ENCODE measurements at regions of chr2 and their contacts with region 1.

Region 1: GRCh38 chr2:29063646-29064343 is 10.5 kb downstream of the PCARE start:
- DNase-seq: peak; percentile 28
- H3K4me3 ChIP-seq: no peak overlapping the region
- H3K27ac ChIP-seq: peak overlapping the region; percentile 28 to 71
- H3K4me1 ChIP-seq: peaks cover 3% of the 10 kb centered on the region
- H3K27me3 ChIP-seq: no peaks in the 10 kb centered on the region
- CTCF ChIP-seq: no peak
- POLR2A ChIP-seq: no peak

Region 2: GRCh38 chr2:28894470-28895177 is 169.2 kb before region 1 on chr2 and contains the start of gene WDR43:
- intact Hi-C with region 1: no loop called
- DNase-seq: peak; percentile 96
- H3K4me3 ChIP-seq: peak within 1 kb of the TSS; percentile 89 to 98
- H3K27ac ChIP-seq: peak within 1 kb of the TSS; percentile 55 to 56
- H3K4me1 ChIP-seq: peaks cover 8% of the 10 kb centered on the region
- H3K27me3 ChIP-seq: no peaks in the 10 kb centered on the region
- CTCF ChIP-seq: peak in 2 of 4 experiments; percentile 25 to 26
- POLR2A ChIP-seq: peak; percentile 67
- total RNA-seq, gene WDR43: 30.6 to 36.9 TPM

Region 3: DNA sequence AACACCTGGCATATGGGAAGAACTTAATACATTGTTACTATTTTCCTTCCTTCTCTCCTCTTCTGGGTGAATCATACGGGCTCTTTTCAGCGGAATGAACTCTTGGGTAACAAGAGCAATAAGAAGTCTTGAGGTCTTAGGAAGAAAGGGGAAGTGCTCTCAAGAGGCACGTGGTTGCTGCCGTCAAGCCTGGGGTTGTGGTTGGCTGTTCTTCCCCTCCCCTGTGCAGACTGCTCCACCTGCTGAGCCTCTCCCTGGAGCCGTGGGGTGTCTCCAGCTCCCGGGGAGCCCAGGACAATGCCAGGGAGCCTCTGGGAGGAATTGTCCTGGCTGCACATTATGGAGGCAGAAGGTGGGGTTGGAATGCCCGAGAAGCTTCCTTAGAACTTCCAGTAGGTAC is 63.3 kb before region 1 on chr2:
- intact Hi-C with region 1: no loop called
- DNase-seq: no peak
- H3K4me3 ChIP-seq: no peak overlapping the region
- H3K27ac ChIP-seq: no peak overlapping the region
- H3K4me1 ChIP-seq: no peaks in the 10 kb centered on the region
- H3K27me3 ChIP-seq: no peaks in the 10 kb centered on the region
- CTCF ChIP-seq: no peak
- POLR2A ChIP-seq: no peak

Region 4: DNA sequence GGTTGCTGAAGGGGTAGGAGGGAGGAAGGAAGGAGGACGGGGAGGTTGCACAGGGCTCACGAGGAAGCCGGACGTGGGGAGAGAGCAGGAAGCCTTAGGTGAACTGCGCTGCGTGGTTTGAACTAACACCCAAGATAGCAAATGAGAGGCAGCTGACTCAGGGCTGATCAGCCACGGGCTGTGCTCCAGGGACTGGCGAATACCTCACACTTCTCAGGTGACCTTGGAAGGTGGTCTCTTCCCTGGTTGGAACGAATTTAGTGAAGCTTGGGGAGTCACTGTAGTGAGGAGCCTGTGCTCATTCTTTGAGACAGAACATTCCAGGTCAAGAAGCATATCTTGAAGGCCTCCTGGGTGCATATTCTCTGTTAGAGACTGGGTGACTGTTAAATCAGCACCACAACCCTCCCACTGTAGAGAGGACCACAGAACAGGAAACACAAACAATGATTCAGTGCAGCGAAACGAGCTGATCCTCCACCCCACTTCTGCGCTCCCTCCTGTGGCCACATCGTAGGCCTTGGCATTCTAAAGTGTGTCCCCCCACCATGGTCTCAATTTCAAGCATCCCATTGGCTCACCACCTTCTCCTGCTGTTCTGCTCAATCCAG is 48.9 kb before region 1 on chr2:
- intact Hi-C with region 1: loop called (anchors 5 kb)
- DNase-seq: no peak
- H3K4me3 ChIP-seq: no peak overlapping the region
- H3K27ac ChIP-seq: peak overlapping the region in 1 of 2 donors; percentile 15
- H3K4me1 ChIP-seq: no peaks in the 10 kb centered on the region
- H3K27me3 ChIP-seq: no peaks in the 10 kb centered on the region
- CTCF ChIP-seq: no peak
- POLR2A ChIP-seq: no peak

Region 5: GRCh38 chr2:29115797-29116781 is 52.3 kb after region 1 on chr2:
- intact Hi-C with region 1: loop called (anchors 10 kb)
- DNase-seq: peak; percentile 72
- H3K4me3 ChIP-seq: peak overlapping the region; percentile 60 to 76
- H3K27ac ChIP-seq: peak overlapping the region; percentile 80 to 89
- H3K4me1 ChIP-seq: peaks cover 4% of the 10 kb centered on the region
- H3K27me3 ChIP-seq: no peaks in the 10 kb centered on the region
- CTCF ChIP-seq: no peak
- POLR2A ChIP-seq: peak; percentile 26